Activated CD4-positive, alpha-beta memory T cell treated with anti-CD3 and anti-CD28 coated beads for 36 hours (primary cell): ENCODE measurements at regions of chr17 and their contacts with region 1.

Region 1: GRCh38 chr17:81959362-81960129 is 1.4 kb downstream of the NOTUM start:
- DNase-seq: peak; percentile 81
- H3K4me3 Mint-ChIP-seq: no peak overlapping the region
- H3K27ac Mint-ChIP-seq: no peak overlapping the region
- H3K4me1 Mint-ChIP-seq: peaks cover 2% of the 10 kb centered on the region
- H3K27me3 Mint-ChIP-seq: peaks cover 19% of the 10 kb centered on the region

Region 2: DNA sequence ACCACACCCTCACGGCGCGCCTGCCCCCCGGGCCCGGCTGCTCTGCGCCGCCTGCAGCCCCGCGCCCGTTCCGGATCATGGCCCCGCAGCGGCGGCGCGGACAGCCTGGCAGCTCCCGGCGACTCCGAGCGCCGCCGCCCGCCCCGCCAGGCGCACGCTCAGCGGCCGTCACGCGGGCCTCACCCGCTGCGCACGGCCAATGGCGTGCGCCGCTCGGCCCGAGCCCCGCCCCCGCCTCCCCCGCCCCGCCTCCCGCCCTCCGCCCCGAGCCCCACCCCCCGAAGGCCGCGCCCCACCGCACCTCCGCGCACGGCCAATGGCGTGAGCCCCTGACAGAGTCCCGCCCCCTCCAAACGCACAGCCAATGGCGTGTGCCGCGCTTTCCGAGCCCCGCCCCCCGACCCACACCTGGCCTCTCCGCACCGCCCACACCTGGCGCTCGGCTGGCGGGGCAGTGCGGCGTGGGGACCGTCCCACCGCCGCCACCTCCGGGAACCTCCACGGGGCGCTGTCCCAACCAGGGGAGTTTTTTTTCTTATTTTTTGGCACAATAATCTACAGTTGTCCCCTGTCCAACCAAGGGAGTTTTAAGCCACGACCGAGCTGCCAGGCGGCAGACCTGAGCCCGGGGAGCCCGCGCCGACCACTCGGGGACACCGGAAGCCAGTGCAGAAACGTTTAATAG is 48.1 kb before region 1 on chr17 and contains the start of gene PCYT2:
- CTCF ChIA-PET with region 1: interaction called, 8 read pairs
- POLR2A ChIA-PET with region 1: no interaction called
- intact Hi-C with region 1: loop called (anchors 5 kb)
- DNase-seq: peak; percentile 95
- H3K4me3 Mint-ChIP-seq: peak within 1 kb of the TSS; percentile 85
- H3K27ac Mint-ChIP-seq: no peak within 1 kb of the TSS
- H3K4me1 Mint-ChIP-seq: peaks cover 11% of the 10 kb centered on the region
- H3K27me3 Mint-ChIP-seq: no peaks in the 10 kb centered on the region
- total RNA-seq, gene PCYT2: 28.8 to 29.7 TPM

Region 3: DNA sequence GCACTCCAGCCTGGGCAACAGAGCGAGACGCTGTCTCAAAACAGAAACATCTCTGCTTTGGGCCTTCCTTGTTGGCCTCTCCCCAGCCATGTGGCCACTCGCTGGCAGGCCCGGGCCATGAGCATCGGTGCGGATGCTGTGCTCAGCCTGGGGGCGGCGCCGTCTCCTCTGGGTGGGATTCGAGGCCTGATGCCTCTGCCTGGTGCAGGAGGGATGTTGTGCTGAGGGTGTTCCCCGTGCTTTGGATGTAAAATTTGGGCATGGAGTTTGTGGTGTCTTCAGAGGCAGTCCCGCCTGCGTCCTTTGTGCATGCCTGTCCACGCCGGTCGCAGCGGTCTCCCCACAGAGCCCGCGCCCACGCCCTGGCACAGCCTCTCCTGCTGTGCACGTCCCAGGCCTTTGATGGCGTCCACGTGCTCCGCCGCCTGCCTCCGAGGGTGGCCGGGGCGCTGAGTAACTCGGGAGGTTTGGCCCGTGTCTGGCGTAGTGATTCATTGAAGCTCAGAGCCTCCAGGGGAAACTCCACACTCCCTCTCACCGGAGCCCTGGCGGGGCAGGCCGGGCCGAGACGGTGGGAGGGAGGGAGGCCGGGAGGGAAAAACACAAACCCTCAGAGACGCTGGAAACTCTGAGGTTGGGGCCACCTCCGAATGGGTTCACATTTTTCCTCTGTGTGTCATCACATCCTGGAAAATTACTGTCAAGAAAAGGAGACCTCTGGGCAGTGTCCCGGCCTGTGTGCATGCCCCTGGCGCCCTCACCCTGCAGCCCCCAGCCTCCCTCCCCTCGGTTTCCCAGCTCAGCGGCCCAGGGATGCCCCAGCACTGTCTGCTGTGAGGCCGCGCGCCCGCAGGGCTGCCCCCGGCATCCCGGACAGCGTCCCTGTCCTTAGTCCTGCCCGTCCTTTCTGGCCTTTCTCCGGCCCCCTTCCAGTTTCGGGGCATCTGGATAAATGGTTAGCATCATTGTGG is 44.1 kb after region 1 on chr17:
- CTCF ChIA-PET with region 1: interaction called, 17 read pairs
- POLR2A ChIA-PET with region 1: no interaction called
- intact Hi-C with region 1: no loop called
- DNase-seq: peak; percentile 76
- H3K4me3 Mint-ChIP-seq: no peak overlapping the region
- H3K27ac Mint-ChIP-seq: peak overlapping the region; percentile 23
- H3K4me1 Mint-ChIP-seq: peaks cover 5% of the 10 kb centered on the region
- H3K27me3 Mint-ChIP-seq: no peaks in the 10 kb centered on the region

Region 4: GRCh38 chr17:82022981-82023374 is 63.4 kb after region 1 on chr17 and contains the start of gene LRRC45:
- CTCF ChIA-PET with region 1: interaction called, 174 read pairs
- POLR2A ChIA-PET with region 1: interaction called, 7 read pairs
- intact Hi-C with region 1: loop called (anchors 1 kb)
- DNase-seq: peak; percentile 100
- H3K4me3 Mint-ChIP-seq: peak within 1 kb of the TSS; percentile 84
- H3K27ac Mint-ChIP-seq: peak within 1 kb of the TSS; percentile 66
- H3K4me1 Mint-ChIP-seq: peaks cover 24% of the 10 kb centered on the region
- H3K27me3 Mint-ChIP-seq: no peaks in the 10 kb centered on the region
- total RNA-seq, gene LRRC45: 16.3 to 19.0 TPM

Region 5: DNA sequence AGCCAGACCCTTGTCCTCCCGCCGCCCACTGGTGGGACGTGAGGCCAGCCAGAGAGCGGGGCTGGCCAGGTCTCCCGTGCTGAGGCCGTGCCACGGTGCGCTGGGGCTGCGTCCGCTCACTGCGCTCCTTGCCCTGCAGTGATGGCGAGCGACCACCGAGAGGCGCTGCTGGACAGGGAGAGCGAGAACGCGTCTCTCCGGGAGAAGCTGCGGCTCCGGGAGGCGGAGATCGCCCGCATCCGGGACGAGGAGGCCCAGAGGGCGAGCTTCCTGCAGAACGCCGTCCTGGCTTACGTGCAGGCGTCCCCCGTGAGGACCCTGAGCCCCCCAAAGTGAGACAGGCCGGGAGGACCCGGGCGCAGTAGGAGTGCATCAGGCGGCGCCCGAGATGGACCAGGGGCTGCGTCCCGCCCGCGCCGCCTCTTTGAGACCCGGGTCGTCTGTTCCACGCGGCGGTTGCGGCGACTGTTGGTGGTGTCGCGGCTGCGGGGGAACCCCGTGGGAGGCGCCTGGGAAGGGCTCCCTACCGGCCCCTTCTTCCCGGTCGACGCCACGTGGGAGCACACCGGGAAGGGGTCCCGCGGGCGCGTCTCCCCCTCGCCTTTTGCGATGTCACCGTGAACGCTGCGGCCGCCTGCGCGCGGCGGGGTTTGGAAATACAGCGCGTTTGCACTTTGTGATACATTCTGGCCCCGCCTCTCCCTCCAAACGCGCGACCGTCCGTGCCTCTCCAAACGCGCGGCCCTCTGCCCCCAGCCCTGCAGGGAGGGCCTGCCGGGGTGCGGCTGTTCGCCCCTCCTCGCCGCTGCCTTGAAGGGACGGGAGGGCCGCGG is 71.1 kb after region 1 on chr17:
- CTCF ChIA-PET with region 1: interaction called, 20 read pairs
- POLR2A ChIA-PET with region 1: no interaction called
- intact Hi-C with region 1: no loop called
- DNase-seq: peak; percentile 89
- H3K4me3 Mint-ChIP-seq: peak overlapping the region; percentile 76
- H3K27ac Mint-ChIP-seq: no peak overlapping the region
- H3K4me1 Mint-ChIP-seq: peaks cover 13% of the 10 kb centered on the region
- H3K27me3 Mint-ChIP-seq: no peaks in the 10 kb centered on the region

Region 6: DNA sequence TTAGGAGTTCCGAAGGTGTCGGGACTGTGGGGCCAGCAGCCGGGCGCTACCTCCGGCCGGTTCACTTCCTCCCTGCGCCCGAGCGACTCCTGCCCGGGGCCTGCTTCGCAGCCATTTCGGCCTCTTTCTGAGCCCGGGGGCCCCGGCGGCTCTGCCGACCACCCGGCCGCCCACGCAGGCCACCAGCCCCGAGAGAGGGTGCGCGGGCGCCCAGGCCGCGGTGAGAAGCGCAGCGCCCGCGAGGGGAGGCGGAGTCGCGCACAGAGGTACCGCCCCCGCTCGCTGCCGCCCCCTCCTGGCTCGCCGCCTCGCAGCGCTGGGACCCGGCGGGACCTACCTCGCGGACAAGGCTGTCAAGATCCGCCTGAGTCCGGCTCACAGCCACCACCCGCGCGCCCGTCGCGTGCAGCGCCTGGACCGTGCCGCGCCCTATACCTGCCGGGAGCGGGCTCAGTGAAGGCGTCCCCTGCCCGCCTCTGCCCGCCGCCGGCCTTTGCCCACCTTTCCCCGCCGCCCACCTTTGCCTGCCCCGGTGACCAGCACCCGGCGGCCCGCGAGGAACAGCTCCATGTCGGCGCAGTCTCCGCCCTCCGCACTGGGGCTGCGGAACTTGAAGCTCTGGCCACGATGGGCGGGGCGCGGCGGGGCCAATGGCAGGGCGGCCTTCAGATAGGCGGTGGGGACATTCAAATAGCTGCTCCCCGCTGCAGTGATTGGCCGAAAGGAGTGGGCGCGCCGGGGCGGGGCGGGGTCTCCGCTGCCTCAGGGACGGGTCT is 77.8 kb after region 1 on chr17 and contains the start of gene DCXR:
- CTCF ChIA-PET with region 1: interaction called, 21 read pairs
- POLR2A ChIA-PET with region 1: interaction called, 6 read pairs
- intact Hi-C with region 1: no loop called
- DNase-seq: peak; percentile 97
- H3K4me3 Mint-ChIP-seq: peak within 1 kb of the TSS; percentile 83
- H3K27ac Mint-ChIP-seq: peak within 1 kb of the TSS; percentile 88
- H3K4me1 Mint-ChIP-seq: peaks cover 19% of the 10 kb centered on the region
- H3K27me3 Mint-ChIP-seq: no peaks in the 10 kb centered on the region
- total RNA-seq, gene DCXR: 105 to 115 TPM

Region 7: GRCh38 chr17:82230627-82231311 is 271.2 kb after region 1 on chr17:
- CTCF ChIA-PET with region 1: no interaction called
- POLR2A ChIA-PET with region 1: no interaction called
- intact Hi-C with region 1: no loop called
- DNase-seq: peak; percentile 72
- H3K4me3 Mint-ChIP-seq: peak overlapping the region; percentile 81
- H3K27ac Mint-ChIP-seq: no peak overlapping the region
- H3K4me1 Mint-ChIP-seq: peaks cover 14% of the 10 kb centered on the region
- H3K27me3 Mint-ChIP-seq: no peaks in the 10 kb centered on the region